Activated naive CD4-positive, alpha-beta T cell treated with anti-CD3 and anti-CD28 coated beads for 36 hours (primary cell): ENCODE measurements at regions of chr1 and their contacts with region 1.

Region 1: GRCh38 chr1:23867953-23868556 is at the start of gene FUCA1:
- DNase-seq: peak; percentile 95
- H3K4me3 Mint-ChIP-seq: peak within 1 kb of the TSS; percentile 79
- H3K27ac Mint-ChIP-seq: peak within 1 kb of the TSS; percentile 26
- H3K4me1 Mint-ChIP-seq: peaks cover 18% of the 10 kb centered on the region
- H3K27me3 Mint-ChIP-seq: no peaks in the 10 kb centered on the region
- total RNA-seq, gene FUCA1: 4.9 to 5.2 TPM

Region 2: GRCh38 chr1:23184212-23184934 is 683.7 kb before region 1 on chr1:
- CTCF ChIA-PET with region 1: no interaction called
- intact Hi-C with region 1: no loop called
- DNase-seq: peak; percentile 25
- H3K4me3 Mint-ChIP-seq: peak overlapping the region; percentile 47
- H3K27ac Mint-ChIP-seq: no peak overlapping the region
- H3K4me1 Mint-ChIP-seq: peaks cover 3% of the 10 kb centered on the region
- H3K27me3 Mint-ChIP-seq: no peaks in the 10 kb centered on the region

Region 3: DNA sequence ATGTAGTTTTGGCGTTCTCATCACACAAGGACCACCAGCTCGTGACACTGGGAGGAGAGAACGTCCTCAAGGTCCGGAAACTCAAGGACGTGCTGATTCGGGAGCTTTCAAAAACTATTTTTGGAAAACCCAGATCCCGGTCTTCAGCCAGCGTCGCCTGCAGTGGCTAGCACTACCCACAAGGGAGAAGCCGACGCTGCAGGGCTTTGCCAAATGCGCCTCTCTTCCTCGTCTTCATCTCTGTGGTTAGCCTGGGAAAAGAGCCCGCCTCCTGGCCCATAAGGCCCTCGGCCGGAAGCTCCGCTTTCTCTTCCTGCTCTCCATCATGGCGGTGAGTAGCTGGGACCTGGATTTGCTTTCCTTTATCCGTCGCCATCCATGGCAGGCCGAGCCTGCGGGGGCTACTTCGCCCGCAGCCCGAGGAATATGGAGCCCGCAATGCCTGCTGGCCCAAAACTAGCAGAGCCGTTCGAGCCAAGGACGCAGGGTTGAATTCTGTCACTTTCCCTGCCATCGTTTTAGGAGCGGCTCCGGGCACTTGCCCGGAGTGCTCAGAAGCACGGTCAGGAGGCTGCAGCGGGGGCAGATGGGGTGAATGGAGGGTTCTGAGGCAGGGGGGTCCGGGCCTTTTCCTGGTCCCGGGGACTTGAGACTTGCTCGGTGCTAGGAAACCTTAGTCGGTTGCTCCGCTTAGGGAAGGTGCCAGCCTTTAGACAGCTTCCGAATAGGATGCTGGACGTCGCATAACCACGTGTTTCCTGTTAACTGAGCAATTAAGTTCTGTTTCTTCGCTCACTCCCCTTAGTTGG is 176.4 kb before region 1 on chr1 and contains the start of gene RPL11:
- CTCF ChIA-PET with region 1: no interaction called
- intact Hi-C with region 1: loop called (anchors 1 kb)
- DNase-seq: peak; percentile 93
- H3K4me3 Mint-ChIP-seq: peak within 1 kb of the TSS; percentile 95
- H3K27ac Mint-ChIP-seq: peak within 1 kb of the TSS; percentile 97
- H3K4me1 Mint-ChIP-seq: peaks cover 43% of the 10 kb centered on the region
- H3K27me3 Mint-ChIP-seq: peaks cover under 1% of the 10 kb centered on the region
- total RNA-seq, gene RPL11: 1,701 to 1,742 TPM

Region 4: GRCh38 chr1:23800400-23801337 is 67.4 kb before region 1 on chr1 and contains the start of gene GALE:
- CTCF ChIA-PET with region 1: no interaction called
- intact Hi-C with region 1: loop called (anchors 2 kb)
- DNase-seq: peak; percentile 98
- H3K4me3 Mint-ChIP-seq: peak within 1 kb of the TSS; percentile 92
- H3K27ac Mint-ChIP-seq: peak within 1 kb of the TSS; percentile 80
- H3K4me1 Mint-ChIP-seq: peaks cover 11% of the 10 kb centered on the region
- H3K27me3 Mint-ChIP-seq: no peaks in the 10 kb centered on the region
- total RNA-seq, gene GALE: 19.7 to 23.1 TPM

Region 5: GRCh38 chr1:23825076-23825761 is 42.8 kb before region 1 on chr1 and contains the start of gene HMGCL:
- CTCF ChIA-PET with region 1: interaction called, 3 read pairs
- intact Hi-C with region 1: loop called (anchors 1 kb)
- DNase-seq: peak; percentile 92
- H3K4me3 Mint-ChIP-seq: peak within 1 kb of the TSS; percentile 91
- H3K27ac Mint-ChIP-seq: peak within 1 kb of the TSS; percentile 92
- H3K4me1 Mint-ChIP-seq: peaks cover 15% of the 10 kb centered on the region
- H3K27me3 Mint-ChIP-seq: no peaks in the 10 kb centered on the region
- total RNA-seq, gene HMGCL: 31.5 to 34.5 TPM

Region 6: DNA sequence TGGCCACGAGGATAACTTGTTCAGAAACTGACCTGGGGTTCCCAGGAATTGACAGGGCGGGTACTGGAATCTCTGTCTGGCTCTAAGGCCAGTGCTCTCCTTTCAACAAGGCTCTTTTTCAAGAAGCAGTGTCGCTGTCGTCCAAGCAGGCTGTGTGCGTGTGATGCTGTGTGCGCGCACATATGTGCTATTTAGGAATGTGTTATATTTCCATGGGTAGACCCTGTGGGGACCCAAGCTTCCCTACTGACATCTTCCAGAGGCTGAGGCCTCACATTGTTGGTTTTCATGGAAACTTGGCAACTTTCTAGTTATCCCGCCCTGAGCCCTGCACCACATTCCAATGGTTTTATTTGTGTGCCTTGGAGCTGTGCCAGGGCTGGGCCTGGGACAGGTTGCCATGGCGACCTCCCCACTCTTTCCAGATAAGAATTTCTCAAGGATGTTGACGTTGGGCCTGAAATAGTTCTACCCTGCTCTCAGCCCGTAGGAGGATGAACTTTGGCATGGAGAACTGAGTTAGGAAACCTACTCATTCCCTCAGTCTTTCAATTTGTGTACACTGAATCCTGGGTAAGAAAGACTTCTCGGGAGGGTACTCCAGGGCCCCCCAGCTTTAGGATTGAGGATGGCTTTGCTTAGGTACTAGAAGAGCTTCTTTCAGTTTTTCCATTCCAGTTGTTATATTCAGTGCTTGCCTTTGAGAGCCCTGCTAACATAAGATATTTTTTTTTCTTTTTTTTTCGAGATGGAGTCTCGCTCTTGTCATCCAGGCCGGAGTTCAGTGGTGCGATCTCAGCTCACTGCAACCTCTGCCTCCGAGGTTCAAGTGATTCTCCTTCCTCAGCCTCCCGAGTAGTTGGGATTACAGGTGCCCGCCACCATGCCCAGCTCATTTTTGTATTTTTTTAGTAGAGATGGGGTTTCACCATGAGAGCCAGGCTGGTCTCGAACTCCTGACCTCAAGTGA is 150.8 kb after region 1 on chr1:
- CTCF ChIA-PET with region 1: no interaction called
- intact Hi-C with region 1: no loop called
- DNase-seq: no peak
- H3K4me3 Mint-ChIP-seq: no peak overlapping the region
- H3K27ac Mint-ChIP-seq: no peak overlapping the region
- H3K4me1 Mint-ChIP-seq: no peaks in the 10 kb centered on the region
- H3K27me3 Mint-ChIP-seq: peaks cover 2% of the 10 kb centered on the region